T-cell (primary cell): ENCODE measurements at regions of chr4 and their contacts with region 1.

Region 1: GRCh38 chr4:77852892-77853495 is 9.6 kb upstream of the MRPL1 start:
- DNase-seq: peak; percentile 33 to 90 (median 74)
- ATAC-seq: peak; percentile 86 to 90 (median 88)
- H3K4me3 ChIP-seq: peak overlapping the region in 1 of 2 donors; percentile 19
- H3K4me3 Mint-ChIP-seq: peak overlapping the region; percentile 54 to 84 (median 64)
- H3K27ac ChIP-seq: peak overlapping the region; percentile 97
- H3K27ac Mint-ChIP-seq: peak overlapping the region; percentile 98 to 99
- H3K4me1 ChIP-seq: peaks cover 43 to 46% of the 10 kb centered on the region in 2 experiments
- H3K4me1 Mint-ChIP-seq: peaks cover 61 to 65% (median 63%) of the 10 kb centered on the region in 3 donors
- H3K27me3 ChIP-seq: no peaks in the 10 kb centered on the region
- H3K27me3 Mint-ChIP-seq: no peaks in the 10 kb centered on the region

Region 2: DNA sequence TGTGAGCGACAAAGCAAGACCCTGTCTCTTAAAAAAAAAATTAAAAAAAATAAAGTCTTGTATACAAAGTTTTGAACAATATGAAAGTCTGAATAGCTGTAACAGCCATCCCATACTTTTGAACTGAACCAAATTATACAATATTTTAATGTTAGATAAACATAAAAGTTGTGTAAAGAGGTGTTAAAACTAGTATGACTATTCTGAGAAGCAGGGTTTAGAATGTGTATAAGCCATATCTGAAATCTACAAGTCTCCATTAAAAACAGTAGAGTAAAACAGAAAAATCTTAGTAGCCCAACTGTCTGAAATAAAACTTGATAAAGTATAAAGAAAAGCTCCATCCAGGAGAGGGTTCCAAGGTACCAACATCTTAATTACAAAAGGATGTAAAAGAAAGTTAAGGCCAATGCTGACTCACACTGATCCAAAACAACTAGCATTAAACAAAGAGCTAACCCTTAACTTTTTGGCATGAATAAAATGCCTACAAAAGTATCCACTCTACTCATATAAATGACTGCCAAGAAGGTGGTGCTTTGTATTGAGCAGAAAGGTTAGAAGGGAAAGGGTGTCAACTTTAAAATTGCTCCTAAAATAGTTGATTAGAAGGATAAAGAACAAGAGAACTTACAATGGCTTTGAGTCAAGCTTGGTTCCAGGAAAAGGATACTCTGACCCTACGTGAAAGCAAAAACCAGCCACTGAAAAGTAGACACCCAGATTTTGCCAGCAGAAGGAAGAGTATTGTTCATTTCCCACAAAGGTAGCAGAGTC is 52.3 kb before region 1 on chr4:
- CTCF ChIA-PET with region 1: no interaction called
- POLR2A ChIA-PET with region 1: interaction called, 6 to 10 read pairs
- DNase-seq: no peak
- ATAC-seq: peak; percentile 13 to 55 (median 44)
- H3K4me3 ChIP-seq: peak overlapping the region; percentile 19 to 25
- H3K4me3 Mint-ChIP-seq: peak overlapping the region; percentile 58 to 73 (median 60)
- H3K27ac ChIP-seq: peak overlapping the region; percentile 70
- H3K27ac Mint-ChIP-seq: peak overlapping the region; percentile 63 to 85
- H3K4me1 ChIP-seq: peaks cover 40 to 48% of the 10 kb centered on the region in 2 experiments
- H3K4me1 Mint-ChIP-seq: peaks cover 88 to 91% (median 90%) of the 10 kb centered on the region in 3 donors
- H3K27me3 ChIP-seq: no peaks in the 10 kb centered on the region
- H3K27me3 Mint-ChIP-seq: no peaks in the 10 kb centered on the region

Region 3: GRCh38 chr4:77881460-77882278 is 28.7 kb after region 1 on chr4:
- CTCF ChIA-PET with region 1: no interaction called
- POLR2A ChIA-PET with region 1: no interaction called
- DNase-seq: no peak
- ATAC-seq: no peak
- H3K4me3 ChIP-seq: no peak overlapping the region
- H3K4me3 Mint-ChIP-seq: no peak overlapping the region
- H3K27ac ChIP-seq: no peak overlapping the region
- H3K27ac Mint-ChIP-seq: no peak overlapping the region
- H3K4me1 ChIP-seq: peaks cover 4 to 10% of the 10 kb centered on the region in 2 experiments
- H3K4me1 Mint-ChIP-seq: peaks cover 26 to 34% (median 30%) of the 10 kb centered on the region in 3 donors
- H3K27me3 ChIP-seq: no peaks in the 10 kb centered on the region
- H3K27me3 Mint-ChIP-seq: no peaks in the 10 kb centered on the region